Activated T-helper 2 cell treated with anti-CD3 and anti-CD28 coated beads, Interferon-gamma antibody, Interleukin-2, Interleukin-4, amounts not matched to agents 10 μg/mL and 5 μg/mL and 100 μg/mL, durations not matched to agents 14 hours and 24 hours and 36 hours (primary cell): ENCODE measurements at regions of chr13 and their contacts with region 1.

Region 1: DNA sequence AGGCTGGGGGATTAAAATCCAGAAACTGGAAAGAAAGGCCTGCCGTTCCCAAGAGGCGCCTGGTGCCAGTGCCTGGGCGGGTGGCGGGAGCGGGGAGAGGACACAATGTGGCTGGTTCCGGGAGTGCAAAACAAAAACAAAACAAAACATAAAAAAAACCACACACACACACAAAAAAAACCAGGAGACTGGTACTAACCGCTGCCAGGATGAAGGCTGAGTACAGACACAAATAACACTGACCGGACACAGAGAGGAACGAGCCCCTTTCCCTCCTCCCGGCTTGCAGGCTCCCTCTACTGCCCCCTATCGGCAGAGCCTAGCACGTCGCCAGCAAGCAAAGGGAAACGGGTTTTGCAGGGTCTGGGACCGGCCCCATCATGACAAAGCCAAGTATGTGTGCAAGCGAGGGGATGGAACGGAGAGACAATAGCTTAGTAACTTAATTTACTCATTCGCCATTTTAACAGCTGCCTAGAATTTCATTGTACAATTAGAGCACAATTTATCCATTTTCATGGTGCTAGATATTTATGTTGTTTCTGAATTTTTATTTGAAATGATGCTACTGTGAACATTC is 17.9 kb upstream of the ZDHHC20 start:
- DNase-seq: peak; percentile 72
- H3K4me3 Mint-ChIP-seq: peak overlapping the region; percentile 78
- H3K27ac Mint-ChIP-seq: peak overlapping the region; percentile 26
- H3K4me1 Mint-ChIP-seq: peaks cover 10% of the 10 kb centered on the region
- H3K27me3 Mint-ChIP-seq: peaks cover 3% of the 10 kb centered on the region

Region 2: DNA sequence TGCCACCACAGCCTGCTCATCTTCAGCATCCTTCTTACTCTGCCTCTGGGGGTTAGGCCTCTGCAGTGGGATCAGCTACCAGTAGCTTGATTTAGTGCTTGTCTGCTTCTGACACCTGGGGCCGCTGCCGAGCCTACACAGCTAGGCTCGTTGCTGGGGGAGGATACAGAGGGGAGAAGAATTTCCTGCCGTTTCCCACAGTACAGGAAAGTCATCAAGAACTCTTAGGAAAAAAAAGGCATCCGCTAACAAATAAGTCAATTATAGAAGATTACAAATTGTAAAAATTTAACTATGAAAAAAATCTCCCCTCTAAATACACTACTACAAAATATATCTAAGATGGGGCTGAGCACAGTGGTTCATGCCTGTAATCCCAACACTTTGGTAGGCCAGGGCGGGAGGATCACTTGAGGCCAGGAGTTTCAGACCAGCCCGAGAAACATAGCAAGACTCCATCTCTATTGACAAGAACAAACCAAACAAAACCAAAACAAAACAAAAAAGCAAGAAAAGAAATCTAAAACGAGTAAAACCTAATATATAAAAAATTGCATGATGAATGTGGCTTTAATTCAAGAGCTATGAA is 442.3 kb before region 1 on chr13:
- intact Hi-C with region 1: no loop called
- DNase-seq: no peak
- H3K4me3 Mint-ChIP-seq: no peak overlapping the region
- H3K27ac Mint-ChIP-seq: no peak overlapping the region
- H3K4me1 Mint-ChIP-seq: peaks cover 15% of the 10 kb centered on the region
- H3K27me3 Mint-ChIP-seq: no peaks in the 10 kb centered on the region

Region 3: DNA sequence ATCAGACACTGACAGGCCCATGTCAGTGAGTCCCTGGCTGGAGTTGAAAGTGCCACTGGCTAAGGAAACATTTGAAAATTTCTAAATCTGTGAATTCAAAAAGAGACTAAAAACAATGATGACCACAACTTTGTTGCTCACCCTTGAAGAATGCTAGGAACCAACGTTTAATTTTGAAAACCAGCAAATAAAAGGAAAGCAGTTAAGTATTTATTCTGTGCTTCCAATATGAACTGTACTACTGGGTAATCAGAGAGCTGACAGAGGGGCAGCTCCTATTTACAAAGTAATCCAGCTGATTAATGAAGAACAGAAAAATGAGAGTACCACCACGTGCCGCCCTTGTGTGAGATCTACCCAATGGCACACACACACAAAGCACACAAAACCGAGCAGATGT is 370.9 kb before region 1 on chr13:
- intact Hi-C with region 1: loop called (anchors 1 kb)
- DNase-seq: no peak
- H3K4me3 Mint-ChIP-seq: no peak overlapping the region
- H3K27ac Mint-ChIP-seq: no peak overlapping the region
- H3K4me1 Mint-ChIP-seq: no peaks in the 10 kb centered on the region
- H3K27me3 Mint-ChIP-seq: no peaks in the 10 kb centered on the region